Activated CD4-positive, alpha-beta T cell treated with anti-CD3 and anti-CD28 coated beads for 36 hours (primary cell): ENCODE measurements at regions of chr16 and their contacts with region 1.

Region 1: DNA sequence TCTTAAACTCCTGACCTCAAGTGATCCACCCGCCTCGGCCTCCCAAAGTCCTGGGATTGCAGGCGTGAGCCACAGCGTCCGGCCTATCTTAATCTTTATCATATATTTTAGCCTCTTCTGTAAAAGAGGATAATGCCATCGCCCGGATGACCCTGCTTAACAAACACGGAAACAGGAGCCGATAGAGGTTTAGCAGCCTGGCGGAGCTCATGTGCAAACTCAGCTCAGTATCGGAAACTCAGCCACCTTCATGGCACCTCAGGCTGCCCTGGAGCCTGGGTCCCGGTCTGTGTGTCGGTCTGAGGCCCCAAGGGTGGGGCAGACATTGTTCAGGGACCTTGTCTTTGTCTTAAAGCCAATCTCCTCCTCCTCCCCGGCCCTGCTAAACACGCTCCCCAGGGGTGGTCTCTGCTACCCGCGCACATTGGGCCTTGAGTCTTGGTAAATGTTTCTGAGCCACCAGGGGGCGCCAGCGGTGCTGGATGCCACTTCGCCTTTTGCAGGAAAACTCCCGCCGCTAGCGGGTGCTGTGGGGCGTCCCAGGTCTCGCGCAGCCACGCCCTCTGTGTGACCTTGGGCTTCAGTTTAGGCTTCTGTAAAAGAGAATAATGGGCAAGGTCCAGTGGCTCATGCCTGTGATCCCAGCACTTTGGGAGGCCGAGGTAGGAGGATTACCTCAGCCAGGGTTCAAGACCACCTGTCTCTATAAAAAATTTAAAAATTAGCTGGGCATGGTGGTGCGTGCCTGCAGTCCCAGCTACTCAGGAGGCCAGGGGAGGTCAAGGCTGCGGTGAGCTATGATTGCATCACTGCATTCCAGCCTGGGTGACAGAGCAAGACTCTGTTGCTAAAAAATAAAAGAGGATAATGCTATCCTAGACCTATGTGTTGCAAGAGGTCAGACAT is 2.7 kb downstream of the CETP start:
- DNase-seq: peak; percentile 98
- ATAC-seq: peak; percentile 93
- H3K4me3 Mint-ChIP-seq: no peak overlapping the region
- H3K27ac Mint-ChIP-seq: peak overlapping the region; percentile 52
- H3K4me1 Mint-ChIP-seq: peaks cover 17% of the 10 kb centered on the region
- H3K27me3 Mint-ChIP-seq: no peaks in the 10 kb centered on the region

Region 2: DNA sequence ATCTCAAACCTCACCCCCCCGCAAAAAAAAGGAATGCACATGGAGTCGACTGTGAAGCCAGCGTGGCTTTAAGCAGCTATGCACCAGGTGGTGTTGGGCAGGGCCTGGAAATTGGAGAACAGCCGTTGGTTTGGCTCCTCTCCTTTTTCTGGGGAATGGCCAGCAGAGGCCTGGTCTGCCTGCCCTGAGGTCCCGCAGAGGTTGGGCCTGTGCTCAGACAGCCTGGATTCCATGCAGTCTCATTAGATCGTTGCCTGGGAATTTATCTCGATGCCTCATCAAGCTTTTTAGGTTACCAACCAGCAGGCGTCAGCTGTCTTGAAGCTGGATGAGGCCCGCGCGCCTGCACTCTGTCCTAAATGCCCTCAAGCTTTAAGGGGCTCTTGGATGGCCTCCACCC is 89.7 kb before region 1 on chr16:
- CTCF ChIA-PET with region 1: no interaction called
- POLR2A ChIA-PET with region 1: no interaction called
- intact Hi-C with region 1: no loop called
- DNase-seq: no peak
- ATAC-seq: no peak
- H3K4me3 Mint-ChIP-seq: no peak overlapping the region
- H3K27ac Mint-ChIP-seq: no peak overlapping the region
- H3K4me1 Mint-ChIP-seq: no peaks in the 10 kb centered on the region
- H3K27me3 Mint-ChIP-seq: no peaks in the 10 kb centered on the region

Region 3: DNA sequence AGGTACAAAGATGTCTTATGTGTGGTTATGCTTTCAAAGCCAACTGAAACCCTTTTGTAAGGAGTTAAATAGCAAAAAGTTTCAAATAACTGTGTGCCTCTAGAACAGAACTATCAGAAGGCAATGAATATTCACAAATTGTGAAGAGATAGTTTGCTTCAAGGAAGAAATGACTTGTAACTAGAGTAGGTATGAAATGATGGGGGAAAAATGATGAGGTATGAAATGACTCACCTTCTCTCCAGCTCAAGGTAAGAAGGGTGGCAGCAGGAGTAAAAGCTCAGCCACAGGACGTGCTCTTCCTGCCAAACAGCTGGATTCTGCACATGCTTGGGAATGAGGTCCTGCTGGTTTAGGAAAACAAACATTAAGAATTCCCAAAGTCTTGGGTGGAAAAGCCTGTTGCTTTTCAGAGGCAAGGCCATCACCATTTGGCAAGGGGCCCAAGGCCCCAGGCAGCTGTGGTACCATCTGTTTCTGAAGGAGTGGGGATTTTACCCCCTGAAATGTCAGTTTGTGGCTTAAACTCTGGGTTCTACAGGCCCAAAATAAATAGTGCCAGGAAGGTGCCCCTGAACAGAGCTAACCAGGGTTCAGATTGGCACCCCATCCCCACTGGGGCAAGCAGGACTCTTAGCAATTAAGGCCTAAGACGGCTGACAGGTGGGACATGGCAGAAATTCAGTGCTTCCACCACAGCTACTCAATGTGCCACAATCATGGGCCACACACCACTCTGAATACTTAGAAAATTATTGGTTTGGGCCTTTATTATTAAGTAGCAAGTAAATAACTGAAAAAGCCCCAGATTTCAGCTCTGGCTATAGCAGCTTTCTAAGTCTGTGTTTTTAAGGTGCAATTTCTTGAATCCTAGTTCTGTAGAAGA is 19.3 kb before region 1 on chr16:
- CTCF ChIA-PET with region 1: interaction called, 25 read pairs
- POLR2A ChIA-PET with region 1: no interaction called
- intact Hi-C with region 1: no loop called
- DNase-seq: peak; percentile 61
- ATAC-seq: peak; percentile 79
- H3K4me3 Mint-ChIP-seq: peak overlapping the region; percentile 51
- H3K27ac Mint-ChIP-seq: peak overlapping the region; percentile 91
- H3K4me1 Mint-ChIP-seq: peaks cover 63% of the 10 kb centered on the region
- H3K27me3 Mint-ChIP-seq: no peaks in the 10 kb centered on the region

Region 4: GRCh38 chr16:56974549-56975300 is 10.2 kb after region 1 on chr16:
- CTCF ChIA-PET with region 1: interaction called, 20 read pairs
- POLR2A ChIA-PET with region 1: no interaction called
- intact Hi-C with region 1: no loop called
- DNase-seq: no peak
- ATAC-seq: no peak
- H3K4me3 Mint-ChIP-seq: no peak overlapping the region
- H3K27ac Mint-ChIP-seq: peak overlapping the region; percentile 19
- H3K4me1 Mint-ChIP-seq: peaks cover 23% of the 10 kb centered on the region
- H3K27me3 Mint-ChIP-seq: no peaks in the 10 kb centered on the region

Region 5: GRCh38 chr16:57013229-57013628 is 48.7 kb after region 1 on chr16:
- CTCF ChIA-PET with region 1: interaction called, 6 read pairs
- POLR2A ChIA-PET with region 1: interaction called, 3 read pairs
- intact Hi-C with region 1: loop called in 1 of 2 experiments (anchors 1 kb)
- DNase-seq: no peak
- ATAC-seq: no peak
- H3K4me3 Mint-ChIP-seq: peak overlapping the region; percentile 19
- H3K27ac Mint-ChIP-seq: peak overlapping the region; percentile 95
- H3K4me1 Mint-ChIP-seq: peaks cover 85% of the 10 kb centered on the region
- H3K27me3 Mint-ChIP-seq: no peaks in the 10 kb centered on the region

Region 6: GRCh38 chr16:57045694-57046381 is 81.3 kb after region 1 on chr16:
- CTCF ChIA-PET with region 1: interaction called, 25 read pairs
- POLR2A ChIA-PET with region 1: interaction called, 5 read pairs
- intact Hi-C with region 1: loop called (anchors 1 to 2 kb)
- DNase-seq: peak; percentile 62
- ATAC-seq: no peak
- H3K4me3 Mint-ChIP-seq: no peak overlapping the region
- H3K27ac Mint-ChIP-seq: peak overlapping the region; percentile 73
- H3K4me1 Mint-ChIP-seq: peaks cover 48% of the 10 kb centered on the region
- H3K27me3 Mint-ChIP-seq: no peaks in the 10 kb centered on the region

Region 7: GRCh38 chr16:57066625-57067024 is 102.1 kb after region 1 on chr16:
- CTCF ChIA-PET with region 1: interaction called, 11 read pairs
- POLR2A ChIA-PET with region 1: no interaction called
- intact Hi-C with region 1: no loop called
- DNase-seq: no peak
- ATAC-seq: peak; percentile 34
- H3K4me3 Mint-ChIP-seq: no peak overlapping the region
- H3K27ac Mint-ChIP-seq: peak overlapping the region; percentile 18
- H3K4me1 Mint-ChIP-seq: peaks cover 13% of the 10 kb centered on the region
- H3K27me3 Mint-ChIP-seq: no peaks in the 10 kb centered on the region

Region 8: GRCh38 chr16:57167953-57168352 is 203.5 kb after region 1 on chr16:
- CTCF ChIA-PET with region 1: interaction called, 3 read pairs
- POLR2A ChIA-PET with region 1: no interaction called
- intact Hi-C with region 1: loop called (anchors 1 to 2 kb)
- DNase-seq: no peak
- ATAC-seq: peak; percentile 88
- H3K4me3 Mint-ChIP-seq: no peak overlapping the region
- H3K27ac Mint-ChIP-seq: no peak overlapping the region
- H3K4me1 Mint-ChIP-seq: no peaks in the 10 kb centered on the region
- H3K27me3 Mint-ChIP-seq: no peaks in the 10 kb centered on the region

Region 9: GRCh38 chr16:57316390-57317017 is 352.0 kb after region 1 on chr16:
- CTCF ChIA-PET with region 1: no interaction called
- POLR2A ChIA-PET with region 1: no interaction called
- intact Hi-C with region 1: no loop called
- DNase-seq: no peak
- ATAC-seq: no peak
- H3K4me3 Mint-ChIP-seq: no peak overlapping the region
- H3K27ac Mint-ChIP-seq: no peak overlapping the region
- H3K4me1 Mint-ChIP-seq: peaks cover 17% of the 10 kb centered on the region
- H3K27me3 Mint-ChIP-seq: no peaks in the 10 kb centered on the region